ENCODE measurements at regions of chr1 and their contacts with region 1.

Region 1: DNA sequence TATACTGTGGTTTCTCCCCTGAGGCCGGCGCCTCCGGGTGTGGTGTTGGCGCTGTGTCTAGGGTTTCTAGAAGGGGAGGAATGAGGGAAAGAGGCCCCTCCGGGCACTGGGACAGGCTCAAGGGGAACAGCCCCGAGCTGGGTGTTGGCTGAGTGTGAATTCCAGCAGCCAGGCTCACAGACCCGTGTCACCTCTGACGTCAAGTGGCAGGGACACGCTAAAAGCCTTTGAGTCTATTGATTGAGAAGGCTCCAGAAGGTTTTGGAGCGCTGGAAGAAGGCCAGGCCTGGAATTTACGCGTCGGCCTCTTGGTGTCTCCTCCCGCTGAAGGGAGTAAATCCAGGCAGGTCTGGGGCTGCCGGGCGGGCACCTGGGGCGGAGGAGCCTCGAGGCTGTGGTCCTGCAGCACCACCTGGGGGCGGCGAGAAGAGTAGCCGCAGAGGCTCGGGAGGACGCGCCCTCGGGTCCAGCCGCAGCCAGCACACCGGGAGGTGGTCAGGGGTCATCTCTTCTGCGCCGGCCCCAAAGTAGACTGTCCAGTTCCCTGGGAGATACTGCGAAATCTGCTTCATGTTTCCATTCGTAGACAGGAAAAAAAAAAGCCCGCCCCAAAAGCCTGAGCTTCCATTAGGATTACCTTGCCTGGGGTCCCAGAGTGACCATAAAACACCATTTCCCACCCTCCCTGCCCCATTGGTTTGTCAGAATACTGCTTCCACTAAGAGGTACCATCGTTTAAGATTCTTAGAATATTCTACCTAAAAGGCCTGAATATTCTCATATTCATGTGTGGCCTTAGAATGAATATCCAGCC is 61.7 kb downstream of the TLR5 start:
- DNase-seq: peak; percentile 96 to 98
- H3K4me3 ChIP-seq: no peak overlapping the region
- H3K4me3 Mint-ChIP-seq: peak overlapping the region; percentile 60
- H3K27ac Mint-ChIP-seq: peak overlapping the region; percentile 96
- H3K4me1 ChIP-seq: no peaks in the 10 kb centered on the region; the same call in 1 of the 2 replicates
- H3K4me1 Mint-ChIP-seq: peaks cover 20% of the 10 kb centered on the region
- H3K27me3 ChIP-seq: no peaks in the 10 kb centered on the region
- H3K27me3 Mint-ChIP-seq: no peaks in the 10 kb centered on the region
- CTCF ChIP-seq: peak; percentile 92 to 98

Region 2: GRCh38 chr1:222736972-222737371 is 344.4 kb before region 1 on chr1 and contains the start of gene FAM177B:
- CTCF ChIA-PET with region 1: interaction called, 5 read pairs
- POLR2A ChIA-PET with region 1: no interaction called
- intact Hi-C with region 1: loop called (anchors 1 kb)
- DNase-seq: no peak
- H3K4me3 ChIP-seq: no peak within 1 kb of the TSS
- H3K4me3 Mint-ChIP-seq: no peak within 1 kb of the TSS
- H3K27ac Mint-ChIP-seq: no peak within 1 kb of the TSS
- H3K4me1 ChIP-seq: no peaks in the 10 kb centered on the region; the same call in 1 of the 2 replicates
- H3K4me1 Mint-ChIP-seq: no peaks in the 10 kb centered on the region
- H3K27me3 ChIP-seq: no peaks in the 10 kb centered on the region
- H3K27me3 Mint-ChIP-seq: no peaks in the 10 kb centered on the region
- CTCF ChIP-seq: no peak
- total RNA-seq, gene FAM177B: 0.70 TPM in 1 of 2 replicates, not detected in the other

Region 3: GRCh38 chr1:222792744-222793143 is 288.6 kb before region 1 on chr1:
- CTCF ChIA-PET with region 1: interaction called, 11 read pairs
- POLR2A ChIA-PET with region 1: no interaction called
- intact Hi-C with region 1: loop called (anchors 1 kb)
- DNase-seq: peak in 1 of 2 experiments; percentile 19
- H3K4me3 ChIP-seq: no peak overlapping the region
- H3K4me3 Mint-ChIP-seq: no peak overlapping the region
- H3K27ac Mint-ChIP-seq: no peak overlapping the region
- H3K4me1 ChIP-seq: 0 out of 2 replicates have a peak, but pooled peaks cover 4% of the 10 kb centered on the region
- H3K4me1 Mint-ChIP-seq: peaks cover 20% of the 10 kb centered on the region
- H3K27me3 ChIP-seq: no peaks in the 10 kb centered on the region
- H3K27me3 Mint-ChIP-seq: no peaks in the 10 kb centered on the region
- CTCF ChIP-seq: peak; percentile 52 to 62

Region 4: GRCh38 chr1:222914861-222915632 is 166.3 kb before region 1 on chr1:
- CTCF ChIA-PET with region 1: no interaction called
- POLR2A ChIA-PET with region 1: no interaction called
- intact Hi-C with region 1: loop called (anchors 5 kb)
- DNase-seq: peak in 1 of 2 experiments; percentile 21
- H3K4me3 ChIP-seq: no peak overlapping the region
- H3K4me3 Mint-ChIP-seq: no peak overlapping the region
- H3K27ac Mint-ChIP-seq: peak overlapping the region; percentile 42
- H3K4me1 ChIP-seq: peaks cover 10% of the 10 kb centered on the region
- H3K4me1 Mint-ChIP-seq: peaks cover 24% of the 10 kb centered on the region
- H3K27me3 ChIP-seq: no peaks in the 10 kb centered on the region
- H3K27me3 Mint-ChIP-seq: no peaks in the 10 kb centered on the region
- CTCF ChIP-seq: no peak

Region 5: GRCh38 chr1:223014142-223014873 is 67.1 kb before region 1 on chr1:
- CTCF ChIA-PET with region 1: no interaction called
- POLR2A ChIA-PET with region 1: no interaction called
- intact Hi-C with region 1: loop called (anchors 1 kb)
- DNase-seq: peak; percentile 63 to 64
- H3K4me3 ChIP-seq: no peak overlapping the region
- H3K4me3 Mint-ChIP-seq: no peak overlapping the region
- H3K27ac Mint-ChIP-seq: peak overlapping the region; percentile 44
- H3K4me1 ChIP-seq: peaks cover 45% of the 10 kb centered on the region
- H3K4me1 Mint-ChIP-seq: peaks cover 48% of the 10 kb centered on the region
- H3K27me3 ChIP-seq: no peaks in the 10 kb centered on the region
- H3K27me3 Mint-ChIP-seq: no peaks in the 10 kb centered on the region
- CTCF ChIP-seq: no peak

Region 6: DNA sequence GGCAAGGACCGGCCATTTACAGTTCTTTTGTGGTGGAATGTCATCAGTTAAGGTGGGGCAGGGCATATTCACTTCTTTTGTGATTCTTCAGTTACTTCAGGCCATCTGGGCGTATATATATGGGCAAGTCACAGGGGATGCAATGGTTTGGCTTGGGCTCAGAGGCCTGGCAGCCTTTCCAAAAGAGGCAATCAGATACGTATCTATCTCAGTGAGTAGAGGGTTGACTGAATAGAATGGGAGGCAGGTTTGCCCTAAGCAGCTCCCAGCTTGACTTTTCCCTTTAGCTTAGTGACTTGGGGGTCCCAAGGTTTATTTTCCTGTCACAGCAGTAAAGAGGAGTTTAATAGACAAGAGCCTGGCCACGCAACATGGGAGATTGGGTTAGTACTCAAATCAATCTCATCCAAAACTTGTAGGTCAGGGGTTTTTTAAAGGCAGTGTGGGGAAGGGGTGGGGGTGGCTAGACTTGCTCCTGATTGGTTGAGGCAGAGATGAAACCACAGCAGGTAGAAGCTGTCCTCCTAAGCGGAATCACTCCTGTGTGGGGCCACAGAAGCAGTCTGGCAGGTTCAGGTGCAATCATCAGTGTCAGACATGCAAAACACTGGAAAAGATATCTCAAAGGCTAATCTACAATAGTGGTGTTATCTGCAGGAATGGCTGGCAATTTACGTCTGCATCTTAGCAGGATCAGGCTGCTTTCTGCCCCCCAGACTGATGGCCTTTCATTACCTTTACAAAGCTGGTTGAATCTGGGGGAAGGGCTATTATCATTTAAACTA is 51.2 kb before region 1 on chr1:
- CTCF ChIA-PET with region 1: no interaction called
- POLR2A ChIA-PET with region 1: no interaction called
- intact Hi-C with region 1: loop called (anchors 1 kb)
- DNase-seq: peak; percentile 55 to 59
- H3K4me3 ChIP-seq: no peak overlapping the region
- H3K4me3 Mint-ChIP-seq: no peak overlapping the region
- H3K27ac Mint-ChIP-seq: no peak overlapping the region
- H3K4me1 ChIP-seq: peaks cover 33% of the 10 kb centered on the region
- H3K4me1 Mint-ChIP-seq: peaks cover 27% of the 10 kb centered on the region
- H3K27me3 ChIP-seq: no peaks in the 10 kb centered on the region
- H3K27me3 Mint-ChIP-seq: no peaks in the 10 kb centered on the region
- CTCF ChIP-seq: no peak

Region 7: GRCh38 chr1:223102797-223103533 is 21.6 kb after region 1 on chr1:
- CTCF ChIA-PET with region 1: no interaction called
- POLR2A ChIA-PET with region 1: no interaction called
- intact Hi-C with region 1: no loop called
- DNase-seq: peak; percentile 24 to 52
- H3K4me3 ChIP-seq: no peak overlapping the region
- H3K4me3 Mint-ChIP-seq: no peak overlapping the region
- H3K27ac Mint-ChIP-seq: no peak overlapping the region
- H3K4me1 ChIP-seq: peaks cover 14% of the 10 kb centered on the region
- H3K4me1 Mint-ChIP-seq: no peaks in the 10 kb centered on the region
- H3K27me3 ChIP-seq: no peaks in the 10 kb centered on the region
- H3K27me3 Mint-ChIP-seq: no peaks in the 10 kb centered on the region
- CTCF ChIP-seq: no peak

Region 8: DNA sequence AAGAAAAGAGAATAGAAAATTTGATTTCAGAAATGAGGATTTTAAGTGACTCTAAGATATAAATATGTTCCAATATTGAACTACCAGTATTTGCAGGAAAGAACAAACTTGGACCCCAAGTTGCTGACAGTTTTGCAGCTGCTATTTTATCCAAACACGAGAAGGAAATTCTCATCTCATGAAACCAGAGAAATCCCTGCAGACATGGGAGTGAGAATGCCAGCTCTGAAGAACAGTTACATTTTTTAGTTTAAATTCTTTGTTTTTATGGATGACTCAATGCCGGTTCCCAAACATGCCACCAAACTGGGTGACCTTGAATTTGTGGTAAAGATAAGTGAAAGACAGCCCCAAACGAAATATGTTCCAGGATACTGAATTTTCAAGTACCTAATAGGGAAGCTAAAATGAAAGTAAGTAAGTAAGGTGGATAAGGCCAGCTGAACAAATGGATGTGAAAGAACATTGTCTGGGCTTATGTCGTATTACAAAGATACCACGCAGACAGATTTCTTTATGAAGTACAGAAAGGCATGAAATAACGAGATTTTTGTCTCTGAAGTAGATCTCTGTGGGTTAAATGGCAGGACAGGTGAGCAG is 41.7 kb after region 1 on chr1:
- CTCF ChIA-PET with region 1: no interaction called
- POLR2A ChIA-PET with region 1: no interaction called
- intact Hi-C with region 1: loop called (anchors 1 kb)
- DNase-seq: no peak
- H3K4me3 ChIP-seq: no peak overlapping the region
- H3K4me3 Mint-ChIP-seq: peak overlapping the region; percentile 49
- H3K27ac Mint-ChIP-seq: no peak overlapping the region
- H3K4me1 ChIP-seq: peaks cover 29% of the 10 kb centered on the region
- H3K4me1 Mint-ChIP-seq: peaks cover 20% of the 10 kb centered on the region
- H3K27me3 ChIP-seq: no peaks in the 10 kb centered on the region
- H3K27me3 Mint-ChIP-seq: no peaks in the 10 kb centered on the region
- CTCF ChIP-seq: no peak

Measured in Caco-2 (cell line).